Activated CD8-positive, alpha-beta memory T cell treated with anti-CD3 and anti-CD28 coated beads, Interleukin-2, amount 10 ng/mL, durations not matched to agents 7 days and 5 days (primary cell): ENCODE measurements at regions of chr21 and their contacts with region 1.

Region 1: DNA sequence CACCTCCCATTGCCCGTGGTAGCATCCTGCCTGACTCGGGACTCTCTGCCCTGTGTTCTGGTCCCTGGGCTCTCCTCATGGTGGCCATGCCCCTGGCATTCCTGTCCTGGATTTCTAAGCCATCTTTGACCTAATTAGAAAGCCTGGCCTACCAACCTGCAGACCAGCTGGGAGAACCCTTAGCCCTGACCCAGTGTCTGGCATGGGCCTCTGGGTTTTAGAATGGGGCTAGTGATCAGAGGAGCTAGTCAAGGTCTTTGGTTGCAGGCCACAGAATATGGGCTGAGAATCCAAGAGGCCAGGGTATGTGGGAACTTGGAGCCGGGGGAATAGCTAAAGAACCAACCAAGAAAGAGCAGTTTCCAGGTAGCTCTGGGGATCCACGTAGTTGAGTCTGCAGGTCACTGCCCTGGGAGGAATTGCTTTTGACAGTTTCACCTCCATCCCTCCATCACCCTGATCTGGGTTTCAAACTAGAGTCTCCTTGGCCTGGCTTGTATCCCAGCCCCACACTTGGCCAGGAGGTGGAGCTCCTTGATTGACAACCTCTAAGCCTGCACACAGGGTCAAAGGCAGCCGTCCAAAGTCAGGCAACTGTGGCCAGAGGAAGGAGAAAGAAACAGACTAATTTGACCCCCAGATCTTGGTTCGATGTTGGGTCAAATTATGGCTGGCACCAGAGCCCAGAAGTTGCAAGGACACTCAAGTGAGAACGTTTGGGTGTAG is 54.7 kb upstream of the ABCG1 start:
- DNase-seq: peak; percentile 80
- ATAC-seq: peak; percentile 89
- H3K4me3 Mint-ChIP-seq: no peak overlapping the region
- H3K27ac Mint-ChIP-seq: no peak overlapping the region
- H3K4me1 Mint-ChIP-seq: peaks cover 25% of the 10 kb centered on the region
- H3K27me3 Mint-ChIP-seq: peaks cover under 1% of the 10 kb centered on the region

Region 2: DNA sequence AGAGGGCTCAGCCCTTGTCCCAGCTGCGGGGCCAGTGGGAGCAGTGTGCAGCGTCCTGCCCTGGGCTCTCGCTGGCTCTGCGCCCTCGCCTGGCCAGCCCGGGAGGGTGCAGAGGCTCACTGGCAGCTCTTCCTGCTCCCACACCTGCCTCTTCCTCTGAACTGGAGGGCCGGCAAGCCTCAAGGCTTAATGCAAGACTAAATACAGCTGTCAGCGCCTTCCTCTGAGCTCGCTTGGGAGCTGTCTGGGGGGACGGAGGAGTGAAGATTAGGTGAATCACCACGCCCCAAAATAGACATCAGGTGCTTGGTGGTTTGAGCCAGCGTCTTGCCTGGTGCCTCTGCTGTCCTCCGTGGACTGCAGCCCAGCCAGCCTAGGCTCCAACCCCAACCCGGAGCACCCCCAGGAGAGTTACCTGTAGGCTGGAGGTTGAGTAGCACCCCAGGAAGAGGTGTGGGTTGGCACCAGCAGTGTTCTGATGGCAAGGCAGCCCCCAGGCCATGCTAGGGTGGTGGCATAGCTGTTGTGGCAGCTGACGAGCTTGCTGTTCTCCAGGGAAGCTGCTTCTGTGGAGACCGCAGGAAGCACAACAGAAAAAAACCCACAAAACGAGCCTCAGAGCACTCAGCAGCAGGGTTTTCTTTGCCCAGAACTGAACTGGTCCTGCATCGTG is 56.2 kb before region 1 on chr21:
- CTCF ChIA-PET with region 1: no interaction called
- DNase-seq: peak; percentile 70
- ATAC-seq: peak; percentile 98
- H3K4me3 Mint-ChIP-seq: no peak overlapping the region
- H3K27ac Mint-ChIP-seq: no peak overlapping the region
- H3K4me1 Mint-ChIP-seq: peaks cover 4% of the 10 kb centered on the region
- H3K27me3 Mint-ChIP-seq: peaks cover 9% of the 10 kb centered on the region

Region 3: DNA sequence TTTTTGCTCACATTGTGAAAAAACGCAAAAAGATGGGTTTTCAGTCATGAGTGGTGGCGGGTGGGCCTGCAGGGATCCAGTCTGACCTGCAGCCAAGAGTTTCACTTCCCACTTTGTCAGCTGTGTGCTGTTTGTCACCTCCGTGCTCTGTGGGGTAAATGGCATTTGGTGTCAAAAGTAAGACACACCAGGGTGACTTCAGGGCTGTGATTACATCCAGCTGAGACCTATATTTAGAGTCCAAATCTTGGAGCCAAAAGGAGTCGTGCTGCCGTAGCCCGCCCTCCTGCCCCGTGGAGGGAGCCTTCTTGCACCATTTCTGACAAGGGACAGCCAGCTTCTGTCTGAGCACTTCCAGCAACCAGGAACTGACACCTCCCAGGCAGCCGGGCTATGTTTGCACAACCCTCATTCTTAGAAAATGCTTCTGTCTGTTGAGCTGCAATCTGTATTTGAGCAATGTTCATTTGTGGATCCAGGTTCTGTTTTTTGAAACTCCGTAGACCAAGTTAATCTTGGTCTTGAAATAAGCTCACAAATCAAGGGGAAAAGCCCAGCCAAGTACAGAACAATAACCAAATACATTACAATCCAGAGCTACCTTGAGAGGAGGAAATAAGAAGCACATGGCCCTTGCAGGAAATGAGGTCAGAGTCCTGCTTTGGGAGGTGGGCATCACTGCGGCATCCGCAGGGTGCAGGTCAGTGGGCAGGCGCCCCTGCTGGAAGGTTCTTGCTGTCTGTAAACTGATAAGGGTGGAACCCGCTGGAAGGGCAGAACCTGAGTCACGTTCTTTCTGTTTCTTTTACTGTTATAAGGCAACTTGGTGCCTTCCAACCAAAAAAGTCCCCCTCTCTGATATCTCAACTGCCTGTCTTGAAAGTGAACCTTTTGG is 69.1 kb after region 1 on chr21:
- CTCF ChIA-PET with region 1: interaction called, 13 read pairs
- DNase-seq: peak; percentile 90
- ATAC-seq: peak; percentile 56
- H3K4me3 Mint-ChIP-seq: peak overlapping the region; percentile 23
- H3K27ac Mint-ChIP-seq: peak overlapping the region; percentile 89
- H3K4me1 Mint-ChIP-seq: peaks cover 88% of the 10 kb centered on the region
- H3K27me3 Mint-ChIP-seq: no peaks in the 10 kb centered on the region

Region 4: GRCh38 chr21:42238185-42238934 is 74.1 kb after region 1 on chr21:
- CTCF ChIA-PET with region 1: interaction called, 13 read pairs
- DNase-seq: peak; percentile 74
- ATAC-seq: peak; percentile 22
- H3K4me3 Mint-ChIP-seq: peak overlapping the region; percentile 47
- H3K27ac Mint-ChIP-seq: peak overlapping the region; percentile 86
- H3K4me1 Mint-ChIP-seq: peaks cover 59% of the 10 kb centered on the region
- H3K27me3 Mint-ChIP-seq: no peaks in the 10 kb centered on the region

Region 5: DNA sequence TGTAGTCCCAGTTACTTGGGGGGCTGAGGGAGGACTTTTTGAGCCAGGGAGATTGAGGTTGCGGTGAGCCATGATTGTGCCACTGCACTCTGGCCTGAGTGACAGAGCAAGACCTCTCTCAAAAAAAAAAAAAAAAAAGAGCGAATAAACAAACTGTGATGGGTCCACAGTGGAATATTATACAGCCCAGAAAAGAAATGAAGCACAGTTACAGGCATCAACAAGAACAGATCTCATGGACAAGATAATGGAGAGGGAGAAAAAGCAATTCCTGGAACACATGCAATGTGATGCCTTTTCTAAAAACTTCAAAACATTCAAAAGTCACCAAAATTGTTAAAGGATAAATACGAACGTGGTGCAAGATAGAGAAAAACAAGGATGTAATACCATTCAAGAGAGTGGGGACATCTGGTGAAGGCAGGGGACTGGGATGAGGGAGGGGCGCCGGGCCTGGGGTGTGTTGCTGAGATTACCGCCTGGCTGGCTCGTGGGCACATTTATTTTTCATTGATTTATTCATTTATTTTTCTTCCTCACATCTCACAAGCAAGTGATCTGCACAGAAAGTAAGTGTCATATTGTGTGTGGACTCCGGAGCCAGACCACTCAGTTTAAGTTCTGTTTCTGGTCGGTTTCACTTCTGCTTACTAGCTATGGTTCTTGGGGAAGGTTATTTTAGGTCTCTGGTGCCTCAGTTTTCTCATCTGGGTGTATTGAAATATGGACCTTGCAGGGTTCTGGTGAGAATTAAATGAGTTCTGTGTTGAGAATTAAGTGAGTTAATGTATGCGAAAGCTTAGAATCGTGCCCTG is 84.8 kb after region 1 on chr21:
- CTCF ChIA-PET with region 1: interaction called, 11 read pairs
- DNase-seq: no peak
- ATAC-seq: no peak
- H3K4me3 Mint-ChIP-seq: no peak overlapping the region
- H3K27ac Mint-ChIP-seq: no peak overlapping the region
- H3K4me1 Mint-ChIP-seq: no peaks in the 10 kb centered on the region
- H3K27me3 Mint-ChIP-seq: peaks cover 9% of the 10 kb centered on the region